Ovary (tissue), 10 donors: ENCODE measurements at regions of chr17 and their contacts with region 1.

Region 1: GRCh38 chr17:20992987-20993862 is 49.6 kb downstream of the USP22 start:
- DNase-seq: peak; percentile 50 to 83 (median 78)
- H3K4me3 ChIP-seq: no peak overlapping the region
- H3K27ac ChIP-seq: no peak overlapping the region
- H3K4me1 ChIP-seq: peaks cover 3% of the 10 kb centered on the region
- H3K27me3 ChIP-seq: no peaks in the 10 kb centered on the region
- CTCF ChIP-seq: peak; percentile 69 to 80 (median 70)
- EP300 ChIP-seq: no peak
- POLR2A ChIP-seq: no peak

Region 2: DNA sequence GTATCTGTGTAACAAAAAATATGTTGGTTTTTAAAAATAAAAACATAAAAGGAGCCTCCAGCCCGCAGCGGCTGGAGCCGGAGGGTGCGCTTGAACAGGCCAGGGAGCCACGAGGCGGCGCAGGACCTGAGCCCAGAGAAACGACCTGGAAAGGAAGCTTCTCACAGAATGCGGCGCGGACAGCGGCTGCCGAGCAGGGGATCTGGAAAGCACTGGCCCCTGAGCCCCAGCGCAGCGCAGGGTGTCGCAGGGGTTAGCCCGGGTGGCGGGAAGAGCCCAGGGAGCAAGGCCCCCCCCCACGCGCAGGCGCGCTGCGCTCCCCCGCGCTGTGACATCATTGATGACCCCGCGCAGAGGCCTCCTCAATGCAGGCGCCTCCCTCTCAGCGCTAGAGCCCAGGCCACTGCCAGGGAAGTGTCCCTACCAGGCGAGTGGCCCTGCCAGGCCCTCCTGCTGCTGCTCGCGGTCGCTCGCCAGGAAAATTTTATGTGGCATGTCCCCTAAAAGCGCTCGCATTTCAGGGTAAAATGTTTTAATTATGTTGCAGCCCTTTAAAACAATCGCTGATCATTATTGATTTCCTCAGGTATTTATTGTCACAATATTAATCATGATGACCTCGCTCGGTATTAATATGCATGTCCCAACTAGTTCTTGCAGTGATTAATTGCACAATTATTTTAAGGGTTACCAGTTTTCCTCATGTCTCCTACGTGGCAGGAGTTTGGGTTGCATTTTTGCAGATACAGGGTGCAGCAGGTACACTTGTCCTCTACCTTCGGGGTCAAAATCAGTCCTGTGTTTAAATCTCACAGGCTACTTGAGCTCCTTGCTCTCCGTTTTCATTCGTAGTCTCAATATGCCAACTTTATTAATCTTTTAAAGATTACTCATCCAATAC is 84.6 kb before region 1 on chr17:
- intact Hi-C with region 1: loop called in 3 of 4 experiments (anchors 5 to 10 kb)
- DNase-seq: peak; percentile 83 to 91 (median 87)
- H3K4me3 ChIP-seq: peak overlapping the region; percentile 41
- H3K27ac ChIP-seq: peak overlapping the region; percentile 23 to 77
- H3K4me1 ChIP-seq: peaks cover 4% of the 10 kb centered on the region
- H3K27me3 ChIP-seq: no peaks in the 10 kb centered on the region
- CTCF ChIP-seq: peak; percentile 51 to 83 (median 74)
- EP300 ChIP-seq: no peak
- POLR2A ChIP-seq: peak; percentile 41

Region 3: GRCh38 chr17:21046216-21046615 is 53.0 kb after region 1 on chr17:
- intact Hi-C with region 1: no loop called
- DNase-seq: no peak
- H3K4me3 ChIP-seq: no peak overlapping the region
- H3K27ac ChIP-seq: no peak overlapping the region
- H3K4me1 ChIP-seq: peaks cover 1% of the 10 kb centered on the region
- H3K27me3 ChIP-seq: no peaks in the 10 kb centered on the region
- CTCF ChIP-seq: no peak
- EP300 ChIP-seq: no peak
- POLR2A ChIP-seq: no peak

Region 4: GRCh38 chr17:21061971-21062526 is 68.8 kb after region 1 on chr17:
- intact Hi-C with region 1: no loop called
- DNase-seq: no peak
- H3K4me3 ChIP-seq: no peak overlapping the region
- H3K27ac ChIP-seq: no peak overlapping the region
- H3K4me1 ChIP-seq: no peaks in the 10 kb centered on the region
- H3K27me3 ChIP-seq: no peaks in the 10 kb centered on the region
- CTCF ChIP-seq: no peak
- EP300 ChIP-seq: no peak
- POLR2A ChIP-seq: no peak